ENCODE measurements at regions of chr1 and their contacts with region 1.

Region 1: DNA sequence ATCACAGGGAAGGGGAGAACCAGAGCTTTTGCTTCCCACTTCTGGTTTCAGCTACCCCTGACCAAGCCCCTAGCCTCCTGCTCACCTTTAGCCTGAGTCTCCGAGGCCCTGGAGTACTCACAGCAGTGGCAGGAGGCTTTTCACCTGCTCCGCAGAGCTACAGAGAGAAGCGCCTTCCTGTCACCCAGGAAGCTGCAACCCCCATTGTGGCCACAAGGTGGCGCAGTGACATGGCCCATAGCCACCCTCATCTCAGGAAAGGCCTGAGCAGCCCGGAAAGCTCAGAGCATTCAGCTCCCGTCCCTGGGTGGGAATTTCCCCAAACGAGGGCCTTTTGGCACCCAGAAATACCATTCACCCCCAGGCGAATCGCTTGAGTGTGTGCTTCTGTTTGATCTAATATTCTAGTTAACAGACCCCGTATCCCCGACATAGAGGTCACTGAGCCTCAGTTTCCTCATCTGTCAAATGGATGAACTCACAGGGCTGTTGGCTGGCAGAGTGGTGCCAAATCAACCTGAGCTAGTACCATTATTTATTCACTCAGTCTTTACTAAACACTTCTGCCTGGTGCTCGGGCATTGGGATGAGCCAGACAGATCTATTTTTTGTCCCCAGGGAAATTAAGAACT is 25.3 kb downstream of the A3GALT2 start:
- DNase-seq: peak; percentile 87 to 93 (median 90)
- ATAC-seq: peak; percentile 86
- H3K4me3 ChIP-seq: no peak overlapping the region
- H3K27ac ChIP-seq: no peak overlapping the region
- H3K4me1 ChIP-seq: no peaks in the 10 kb centered on the region
- H3K27me3 ChIP-seq: no peaks in the 10 kb centered on the region
- CTCF ChIP-seq: peak; percentile 93 to 98 (median 96)
- POLR2A ChIP-seq: no peak

Region 2: GRCh38 chr1:32215629-32216480 is 1079.7 kb before region 1 on chr1:
- intact Hi-C with region 1: no loop called
- DNase-seq: peak; percentile 64 to 76 (median 71)
- ATAC-seq: peak; percentile 81
- H3K4me3 ChIP-seq: no peak overlapping the region
- H3K27ac ChIP-seq: no peak overlapping the region
- H3K4me1 ChIP-seq: peaks cover 7% of the 10 kb centered on the region
- H3K27me3 ChIP-seq: no peaks in the 10 kb centered on the region
- CTCF ChIP-seq: peak; percentile 63 to 78 (median 70)
- POLR2A ChIP-seq: no peak

Region 3: GRCh38 chr1:33367485-33368405 is 72.2 kb after region 1 on chr1:
- intact Hi-C with region 1: loop called (anchors 5 kb)
- DNase-seq: peak; percentile 88 to 89 (median 89)
- ATAC-seq: peak; percentile 73
- H3K4me3 ChIP-seq: no peak overlapping the region
- H3K27ac ChIP-seq: no peak overlapping the region
- H3K4me1 ChIP-seq: peaks cover 22% of the 10 kb centered on the region
- H3K27me3 ChIP-seq: no peaks in the 10 kb centered on the region
- CTCF ChIP-seq: peak; percentile 91 to 97 (median 95)
- POLR2A ChIP-seq: no peak

Measured in body of pancreas (tissue), 4 donors.